ENCODE measurements at regions of chr6 and their contacts with region 1.

Region 1: DNA sequence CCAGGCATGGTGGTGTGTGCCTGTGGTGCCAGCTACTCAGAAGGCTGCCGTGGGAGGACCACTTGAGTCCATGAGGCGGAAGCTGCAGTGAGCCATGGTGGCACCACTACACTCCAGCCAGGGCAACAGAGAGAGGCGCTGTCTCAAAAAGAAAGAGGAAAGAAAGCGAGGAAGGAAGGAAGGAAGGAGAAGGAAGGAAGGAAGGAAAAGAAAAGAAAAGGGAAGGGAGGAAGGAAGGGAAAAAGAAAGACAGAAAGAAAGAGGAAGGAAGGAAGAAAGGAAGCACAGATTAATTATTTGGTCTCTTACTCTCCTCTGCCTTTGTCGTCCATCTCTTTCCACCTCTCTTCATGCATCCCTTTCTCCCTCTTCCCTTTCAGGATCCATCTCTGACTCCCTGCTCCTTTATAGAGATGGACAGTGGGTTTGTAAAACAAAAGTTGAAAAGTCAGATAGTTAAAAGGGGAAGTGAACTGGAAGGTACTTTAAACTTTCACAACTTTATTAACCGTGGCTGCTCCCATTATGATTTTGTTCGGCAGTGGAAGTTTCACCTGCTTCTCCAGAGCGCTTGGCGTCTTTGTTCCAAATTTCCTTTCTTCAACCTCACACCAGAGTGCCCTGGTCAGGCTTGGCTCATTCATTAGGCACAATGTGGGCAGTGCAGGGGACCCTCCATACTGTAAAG is 1.5 kb downstream of the HLA-DQA1 start:
- DNase-seq: no peak
- H3K4me3 ChIP-seq: no peak overlapping the region
- H3K4me3 Mint-ChIP-seq: no peak overlapping the region
- H3K27ac Mint-ChIP-seq: no peak overlapping the region
- H3K4me1 ChIP-seq: no peaks in the 10 kb centered on the region
- H3K4me1 Mint-ChIP-seq: no peaks in the 10 kb centered on the region
- H3K27me3 ChIP-seq: no peaks in the 10 kb centered on the region
- H3K27me3 Mint-ChIP-seq: peaks cover 8% of the 10 kb centered on the region
- CTCF ChIP-seq: no peak

Region 2: DNA sequence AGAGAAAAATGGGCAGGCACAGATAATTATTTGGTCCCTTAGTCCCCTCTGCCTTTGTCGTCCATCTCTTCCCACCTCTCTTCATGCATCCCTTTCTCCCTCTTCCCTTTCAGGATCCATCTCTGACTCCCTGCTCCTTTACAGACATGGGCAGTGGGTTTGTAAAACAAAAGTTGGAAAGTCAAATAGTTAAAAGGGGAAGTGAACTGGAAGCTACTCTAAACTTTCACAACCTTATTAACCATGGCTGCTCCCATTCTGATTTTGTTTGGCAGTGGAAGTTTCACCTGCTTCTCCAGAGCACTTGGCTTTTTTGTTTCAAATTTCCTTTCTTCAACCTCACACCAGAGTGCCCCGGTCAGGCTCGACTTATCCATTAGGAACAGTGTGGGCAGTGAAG is 103.7 kb after region 1 on chr6:
- CTCF ChIA-PET with region 1: no interaction called
- POLR2A ChIA-PET with region 1: no interaction called
- intact Hi-C with region 1: loop called (anchors 2 kb)
- DNase-seq: no peak
- H3K4me3 ChIP-seq: no peak overlapping the region
- H3K4me3 Mint-ChIP-seq: no peak overlapping the region
- H3K27ac Mint-ChIP-seq: no peak overlapping the region
- H3K4me1 ChIP-seq: no peaks in the 10 kb centered on the region
- H3K4me1 Mint-ChIP-seq: no peaks in the 10 kb centered on the region
- H3K27me3 ChIP-seq: no peaks in the 10 kb centered on the region; the same call in 1 of the 2 replicates
- H3K27me3 Mint-ChIP-seq: peaks cover 17% of the 10 kb centered on the region
- CTCF ChIP-seq: no peak